Activated naive CD4-positive, alpha-beta T cell treated with anti-CD3 and anti-CD28 coated beads, Interleukin-2, amount 10 ng/mL, durations not matched to agents 7 days and 5 days (primary cell): ENCODE measurements at regions of chr9 and their contacts with region 1.

Region 1: DNA sequence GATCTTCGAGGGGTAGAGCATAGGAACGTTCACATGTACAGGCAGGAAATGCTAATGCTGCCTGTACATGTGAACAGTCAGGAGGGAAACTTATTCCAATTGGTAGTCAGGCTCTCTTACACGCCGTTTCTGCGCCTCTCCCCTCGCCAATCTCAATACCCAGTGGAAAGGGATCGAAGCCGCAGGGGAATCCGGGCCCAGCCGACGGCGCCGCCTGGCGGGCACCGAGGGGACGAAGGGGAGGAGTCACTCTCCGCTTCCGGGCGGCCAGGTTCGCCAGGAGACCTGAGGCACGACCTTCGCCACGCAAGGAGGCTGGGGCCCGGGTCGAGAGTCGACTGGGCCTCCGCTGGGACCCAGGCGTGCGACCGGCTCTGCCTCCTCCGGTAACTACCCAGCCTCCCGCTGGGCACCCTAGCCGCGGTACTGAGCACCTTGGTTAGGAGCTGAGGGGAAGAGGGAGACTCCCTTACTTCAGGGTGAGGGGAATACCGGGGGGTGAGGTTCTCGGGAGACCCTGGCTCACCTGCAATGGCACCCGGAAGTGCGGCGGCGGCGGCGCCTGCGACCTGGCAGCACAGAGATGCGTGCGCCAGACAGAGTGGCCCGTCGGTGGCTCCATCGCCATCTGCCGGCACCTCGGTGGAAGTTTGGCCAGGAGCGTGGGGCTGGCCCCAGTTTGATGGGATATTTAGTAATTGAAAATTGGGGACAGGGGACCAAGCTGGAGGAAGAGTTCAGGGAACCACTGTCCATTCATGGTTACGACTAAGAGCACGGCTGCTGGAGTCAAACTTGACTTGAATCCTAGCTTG is at the start of gene PIGO:
- DNase-seq: peak; percentile 92
- H3K4me3 Mint-ChIP-seq: peak within 1 kb of the TSS; percentile 81
- H3K27ac Mint-ChIP-seq: peak within 1 kb of the TSS; percentile 92
- H3K4me1 Mint-ChIP-seq: peaks cover 51% of the 10 kb centered on the region
- H3K27me3 Mint-ChIP-seq: no peaks in the 10 kb centered on the region

Region 2: DNA sequence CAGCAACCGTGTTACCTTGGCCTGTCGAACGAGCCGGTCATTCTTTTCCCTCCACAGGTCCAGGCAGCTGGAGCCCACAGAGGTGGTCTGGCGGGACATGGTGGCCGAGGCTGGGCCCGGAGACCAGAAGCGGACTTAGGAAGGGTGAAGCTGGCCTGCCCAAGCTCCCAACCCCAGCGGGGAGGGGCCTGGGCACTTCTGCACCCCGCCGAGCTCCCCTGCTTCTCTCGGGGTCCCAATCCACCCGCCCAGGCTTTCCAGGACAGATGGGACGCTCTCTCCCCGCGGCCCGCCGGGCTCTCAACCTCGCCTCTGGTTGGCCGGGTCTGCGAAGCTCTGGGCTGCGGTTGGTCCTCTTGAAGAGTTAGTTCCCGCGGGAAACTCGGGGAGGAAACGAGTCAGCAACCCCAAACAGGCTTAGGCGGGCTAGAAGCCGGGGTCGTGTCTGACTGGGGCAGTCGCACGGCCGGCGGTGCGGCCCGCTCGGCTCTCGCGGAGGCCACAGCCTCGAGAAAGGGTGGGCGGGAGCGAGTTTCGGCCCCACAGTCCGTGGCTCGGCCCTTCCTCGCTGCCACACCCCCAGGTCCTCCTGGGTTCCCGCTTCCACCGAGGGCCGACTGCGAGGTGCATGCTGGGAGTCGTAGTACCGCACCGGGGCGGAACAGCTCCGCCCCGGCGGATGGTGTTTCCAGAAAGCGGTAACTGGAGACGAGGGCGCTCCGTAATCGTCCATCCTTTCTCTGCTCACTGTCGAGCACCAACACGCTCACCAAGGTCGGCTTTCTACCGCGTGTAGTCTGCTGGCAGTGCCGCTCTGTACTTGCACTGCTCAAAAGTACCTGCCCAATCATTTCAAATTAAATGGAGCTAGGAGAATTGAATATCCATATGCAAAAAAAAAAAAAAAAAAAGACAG is 16.6 kb before region 1 on chr9 and contains the start of gene FANCG:
- CTCF ChIA-PET with region 1: interaction called, 34 read pairs
- DNase-seq: peak; percentile 90
- H3K4me3 Mint-ChIP-seq: peak within 1 kb of the TSS; percentile 94
- H3K27ac Mint-ChIP-seq: peak within 1 kb of the TSS; percentile 98
- H3K4me1 Mint-ChIP-seq: peaks cover 31% of the 10 kb centered on the region
- H3K27me3 Mint-ChIP-seq: no peaks in the 10 kb centered on the region

Region 3: GRCh38 chr9:35111001-35111933 is 15.0 kb after region 1 on chr9:
- CTCF ChIA-PET with region 1: interaction called, 13 read pairs
- DNase-seq: peak; percentile 98
- H3K4me3 Mint-ChIP-seq: peak overlapping the region; percentile 73
- H3K27ac Mint-ChIP-seq: peak overlapping the region; percentile 77
- H3K4me1 Mint-ChIP-seq: peaks cover 58% of the 10 kb centered on the region
- H3K27me3 Mint-ChIP-seq: no peaks in the 10 kb centered on the region

Region 4: DNA sequence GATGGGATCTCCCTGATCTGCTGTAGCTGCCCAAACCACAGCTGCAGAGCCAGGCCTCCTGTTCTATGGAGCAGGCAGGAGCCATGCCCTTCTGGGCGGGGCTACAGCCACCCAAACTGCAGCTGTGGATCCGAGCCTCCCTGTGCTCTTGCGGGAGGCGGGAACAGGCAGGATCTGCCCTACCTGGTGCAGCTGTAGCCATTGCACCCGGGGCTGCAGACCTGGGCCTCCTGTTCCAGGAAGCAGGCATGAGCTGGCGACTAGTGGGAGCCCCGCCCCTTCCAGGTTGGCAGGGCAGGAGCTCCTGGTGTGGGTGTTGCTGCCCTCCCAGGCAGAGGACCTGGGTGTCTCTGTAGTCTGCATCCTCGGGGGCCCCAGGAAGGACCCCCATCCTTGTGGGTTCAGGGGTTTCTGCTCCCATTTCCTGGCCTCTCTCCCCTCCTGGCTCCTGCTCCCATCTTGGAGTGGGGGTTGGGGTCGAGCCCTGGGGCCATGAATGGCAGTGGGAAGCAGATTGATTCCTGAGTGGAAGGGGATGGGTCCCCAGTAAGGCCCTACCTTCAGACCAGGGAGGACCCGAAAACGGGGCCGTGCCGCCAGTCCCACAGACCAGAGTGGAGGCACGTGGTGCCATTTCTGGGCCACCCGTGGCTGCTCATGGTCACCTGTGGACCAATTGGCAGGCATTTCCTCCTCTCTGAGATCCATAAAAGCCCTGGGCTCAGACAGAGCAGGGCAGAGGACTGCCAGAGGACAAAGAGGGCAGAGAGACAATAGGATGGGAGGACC is 42.6 kb after region 1 on chr9:
- CTCF ChIA-PET with region 1: no interaction called
- DNase-seq: no peak
- H3K4me3 Mint-ChIP-seq: no peak overlapping the region
- H3K27ac Mint-ChIP-seq: no peak overlapping the region
- H3K4me1 Mint-ChIP-seq: no peaks in the 10 kb centered on the region
- H3K27me3 Mint-ChIP-seq: no peaks in the 10 kb centered on the region